ENCODE measurements at regions of chr1 and their contacts with region 1.

Region 1: GRCh38 chr1:161045750-161046571 is at the start of gene USF1:
- DNase-seq: peak; percentile 94
- H3K4me3 ChIP-seq: peak within 1 kb of the TSS; percentile 69 to 76 (median 70)
- H3K27ac ChIP-seq: peak within 1 kb of the TSS; percentile 81
- H3K4me1 ChIP-seq: peaks cover 8% of the 10 kb centered on the region
- H3K27me3 ChIP-seq: no peaks in the 10 kb centered on the region
- CTCF ChIP-seq: no peak
- total RNA-seq, gene USF1: 31.8 to 40.7 TPM

Region 2: GRCh38 chr1:161021165-161021960 is 24.6 kb before region 1 on chr1:
- CTCF ChIA-PET with region 1: interaction called, 3 read pairs
- dilution Hi-C with region 1: no loop called
- in situ Hi-C with region 1: no loop called
- intact Hi-C with region 1: loop called (anchors 1 kb)
- DNase-seq: peak; percentile 100
- H3K4me3 ChIP-seq: peak overlapping the region; percentile 74 to 81 (median 80)
- H3K27ac ChIP-seq: peak overlapping the region; percentile 98
- H3K4me1 ChIP-seq: peaks cover 34% of the 10 kb centered on the region
- H3K27me3 ChIP-seq: no peaks in the 10 kb centered on the region
- CTCF ChIP-seq: no peak

Region 3: DNA sequence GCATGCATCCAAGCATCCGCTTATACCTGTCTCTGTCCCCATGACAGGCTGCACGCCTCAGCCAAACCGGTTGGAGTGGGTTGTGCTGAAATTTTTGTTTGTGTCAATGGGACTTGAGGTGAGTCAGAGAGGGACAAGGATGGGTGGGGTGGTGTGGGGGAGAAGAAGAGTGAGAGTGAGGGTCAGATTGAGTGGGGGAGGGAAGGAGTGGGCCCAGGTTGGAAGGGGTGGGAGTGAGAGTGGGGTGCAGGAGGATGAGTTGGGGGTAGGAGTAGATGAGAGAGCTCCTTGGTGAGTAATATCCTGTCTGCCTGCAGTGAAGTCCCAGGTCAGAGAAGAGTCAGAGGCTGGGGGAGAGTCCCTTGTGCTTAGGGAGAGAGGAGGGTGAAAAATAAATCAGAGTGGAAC is 46.7 kb after region 1 on chr1:
- CTCF ChIA-PET with region 1: interaction called, 3 read pairs
- dilution Hi-C with region 1: loop called (anchors 5 kb)
- in situ Hi-C with region 1: loop called in 1 of 2 experiments (anchors 5 kb)
- intact Hi-C with region 1: loop called (anchors 1 kb)
- DNase-seq: peak; percentile 83
- H3K4me3 ChIP-seq: no peak overlapping the region
- H3K27ac ChIP-seq: peak overlapping the region; percentile 16
- H3K4me1 ChIP-seq: peaks cover 48% of the 10 kb centered on the region
- H3K27me3 ChIP-seq: no peaks in the 10 kb centered on the region
- CTCF ChIP-seq: no peak

Region 4: DNA sequence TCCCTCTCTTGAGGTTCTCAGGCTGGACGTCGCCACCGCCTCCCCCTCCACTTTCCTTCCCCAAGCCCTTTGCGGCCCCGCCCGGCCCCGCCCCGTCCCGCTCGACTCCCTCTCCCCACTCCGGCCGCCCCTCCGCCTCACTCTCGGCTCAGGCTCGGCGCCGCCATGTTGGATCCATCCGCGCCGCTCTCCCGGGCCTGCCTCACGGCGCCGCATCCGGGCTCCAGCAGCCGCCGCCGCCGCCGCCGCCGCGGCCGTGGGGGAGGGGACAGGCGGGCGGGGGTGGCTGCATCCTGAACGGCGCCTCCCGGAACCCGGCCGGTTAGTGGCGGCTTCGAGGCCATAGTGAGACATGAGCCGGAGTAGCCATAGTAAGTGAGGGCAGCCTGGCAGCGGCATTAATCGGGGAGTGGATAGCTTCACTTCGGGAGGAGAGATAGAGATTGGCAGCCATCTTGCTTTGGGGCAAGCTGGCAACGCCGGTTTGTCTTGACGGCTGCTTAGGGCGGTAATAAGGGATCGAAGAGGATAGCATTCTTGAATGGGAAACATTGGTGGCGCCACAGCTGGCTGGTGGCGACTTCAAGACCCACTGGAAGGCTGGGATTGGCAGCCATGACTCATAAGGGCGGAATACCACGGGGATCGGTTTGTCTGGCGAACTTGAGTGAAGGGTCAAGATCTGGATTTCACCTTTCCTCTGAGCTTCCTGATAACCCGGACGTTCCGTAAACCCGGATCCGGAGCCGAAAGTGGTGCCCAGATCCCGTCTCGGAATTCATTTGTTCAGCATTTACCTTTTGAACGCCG is 86.7 kb after region 1 on chr1 and contains the start of gene DEDD:
- CTCF ChIA-PET with region 1: no interaction called
- dilution Hi-C with region 1: loop called (anchors 5 kb)
- in situ Hi-C with region 1: no loop called
- intact Hi-C with region 1: no loop called
- DNase-seq: peak; percentile 97
- H3K4me3 ChIP-seq: peak within 1 kb of the TSS; percentile 57 to 88 (median 65)
- H3K27ac ChIP-seq: peak within 1 kb of the TSS; percentile 91
- H3K4me1 ChIP-seq: peaks cover 10% of the 10 kb centered on the region
- H3K27me3 ChIP-seq: no peaks in the 10 kb centered on the region
- CTCF ChIP-seq: peak in 1 of 2 donors; percentile 17
- total RNA-seq, gene DEDD: 40.0 to 42.3 TPM

Measured in mammary epithelial cell (primary cell).